Activated naive CD8-positive, alpha-beta T cell treated with anti-CD3 and anti-CD28 coated beads, Interleukin-2, amount 10 ng/mL, durations not matched to agents 7 days and 5 days (primary cell): ENCODE measurements at regions of chr20 and their contacts with region 1.

Region 1: DNA sequence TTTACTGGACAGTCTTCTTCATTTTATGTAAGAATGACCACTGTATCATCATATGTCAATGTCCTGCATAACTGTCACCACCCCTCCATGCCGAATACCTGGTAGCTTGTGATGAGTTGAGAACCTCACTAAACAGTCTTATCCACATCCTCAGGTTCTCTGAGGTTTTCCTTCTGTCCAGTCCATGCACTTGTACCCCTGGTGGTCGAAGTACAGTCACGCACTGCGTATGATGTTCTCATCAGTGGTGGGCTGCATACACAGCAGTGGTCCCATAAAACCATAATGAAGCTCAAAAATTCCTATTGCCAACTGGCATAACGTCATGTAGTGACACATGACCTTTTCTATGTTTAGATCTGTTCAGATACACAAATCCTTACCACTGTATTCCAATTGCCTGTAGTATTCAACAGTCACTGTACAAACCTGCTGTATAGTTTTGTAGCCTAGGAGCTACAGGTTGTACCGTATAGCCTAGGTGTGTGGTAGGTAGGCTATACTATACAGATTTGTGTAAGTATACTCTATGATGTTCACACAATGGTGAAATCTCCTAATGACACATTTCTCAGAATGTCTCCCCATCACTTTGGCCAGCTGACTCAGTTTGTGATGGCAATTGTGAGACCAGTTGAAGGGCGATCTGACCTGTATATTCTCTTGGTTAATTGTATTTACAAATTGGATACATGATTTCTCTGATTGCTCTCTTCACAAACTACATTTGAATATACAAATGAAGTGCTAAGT is 31.3 kb upstream of the SDCBP2 start:
- DNase-seq: no peak
- ATAC-seq: no peak
- H3K4me3 Mint-ChIP-seq: no peak overlapping the region
- H3K27ac Mint-ChIP-seq: peak overlapping the region; percentile 89
- H3K4me1 Mint-ChIP-seq: peaks cover 66% of the 10 kb centered on the region
- H3K27me3 Mint-ChIP-seq: no peaks in the 10 kb centered on the region

Region 2: DNA sequence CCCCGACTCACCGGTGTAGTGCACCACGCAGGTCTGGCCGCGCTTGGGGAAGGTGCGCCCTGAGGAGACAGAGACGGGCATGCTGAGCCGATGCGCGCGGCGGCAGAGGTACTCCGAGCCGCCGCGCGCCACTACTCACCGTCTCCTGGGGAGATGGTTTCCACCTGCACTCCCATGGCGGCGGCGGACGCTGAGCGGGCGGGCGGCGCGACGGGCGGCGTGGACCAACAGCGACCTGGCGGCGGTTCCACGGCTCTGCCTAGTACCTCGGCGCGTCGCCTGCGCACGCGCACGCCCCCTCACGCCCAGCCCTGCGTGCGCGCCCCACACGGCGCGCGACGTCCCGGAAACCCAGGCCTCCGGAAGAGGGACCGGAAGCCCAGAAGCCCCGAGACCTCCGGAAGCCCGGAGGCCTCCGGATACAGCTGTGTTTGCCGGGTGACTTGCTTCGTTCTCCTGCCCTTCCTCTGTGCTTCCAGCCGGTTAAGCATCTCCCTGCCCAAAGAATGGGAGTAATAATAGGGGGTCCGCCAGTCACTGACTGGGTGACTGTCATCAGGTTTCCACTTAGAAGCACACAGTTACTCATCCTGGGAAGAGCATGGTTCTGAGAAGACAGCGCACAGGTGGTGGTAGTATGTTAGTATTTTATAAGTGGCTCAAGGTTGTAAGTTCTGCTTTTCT is 32.7 kb after region 1 on chr20 and contains the start of gene FKBP1A:
- POLR2A ChIA-PET with region 1: interaction called, 11 read pairs
- DNase-seq: peak; percentile 91
- ATAC-seq: peak; percentile 81
- H3K4me3 Mint-ChIP-seq: peak within 1 kb of the TSS; percentile 92
- H3K27ac Mint-ChIP-seq: peak within 1 kb of the TSS; percentile 86
- H3K4me1 Mint-ChIP-seq: peaks cover 48% of the 10 kb centered on the region
- H3K27me3 Mint-ChIP-seq: peaks cover 17% of the 10 kb centered on the region
- total RNA-seq, gene FKBP1A: 231 to 234 TPM

Region 3: GRCh38 chr20:1696521-1697209 is 336.4 kb after region 1 on chr20:
- POLR2A ChIA-PET with region 1: no interaction called
- DNase-seq: no peak
- ATAC-seq: peak; percentile 94
- H3K4me3 Mint-ChIP-seq: peak overlapping the region; percentile 62
- H3K27ac Mint-ChIP-seq: peak overlapping the region; percentile 70
- H3K4me1 Mint-ChIP-seq: peaks cover 22% of the 10 kb centered on the region
- H3K27me3 Mint-ChIP-seq: no peaks in the 10 kb centered on the region